AG04450 (cell line): ENCODE measurements at regions of chr9 and their contacts with region 1.

Region 1: DNA sequence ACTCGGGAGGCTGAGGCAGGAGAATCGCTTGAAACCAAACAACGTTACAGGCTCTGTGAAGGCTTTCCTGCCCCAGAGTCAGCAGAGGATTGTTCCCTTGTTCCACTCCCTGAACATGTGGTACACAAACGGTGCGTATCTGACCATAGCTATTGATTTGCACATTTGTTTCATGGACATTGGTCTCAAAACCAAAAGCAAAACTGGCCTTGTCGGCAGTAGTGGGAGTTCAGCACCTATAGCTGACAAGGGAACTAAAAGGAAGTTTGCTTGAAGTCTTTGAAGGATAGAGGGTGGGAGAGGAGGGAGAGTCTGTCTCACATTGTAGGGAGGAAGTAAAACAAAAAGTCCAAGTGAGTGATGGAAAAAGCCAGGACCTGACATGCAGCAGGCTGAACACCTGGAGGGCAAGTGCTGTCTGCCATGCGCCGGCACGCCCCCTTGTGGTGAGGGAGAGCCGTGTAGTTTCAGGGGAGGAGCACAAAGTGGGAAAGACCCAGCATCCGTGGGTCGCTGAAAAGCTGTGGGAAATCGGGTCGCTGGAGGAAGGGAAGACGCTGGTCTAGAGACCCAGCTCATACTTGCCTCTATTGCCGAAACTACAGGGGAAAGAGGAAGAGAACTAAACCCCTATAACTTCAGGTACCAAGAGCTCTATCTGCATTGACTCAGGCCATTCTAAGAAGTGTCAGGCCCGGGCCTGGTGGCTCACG is 58.0 kb downstream of the RAD23B start:
- DNase-seq: peak; percentile 27
- H3K4me3 ChIP-seq: no peak overlapping the region
- H3K27ac ChIP-seq: no peak overlapping the region
- H3K27me3 ChIP-seq: no peaks in the 10 kb centered on the region
- CTCF ChIP-seq: peak; percentile 93

Region 2: GRCh38 chr9:107172160-107172978 is 168.7 kb before region 1 on chr9:
- CTCF ChIA-PET with region 1: interaction called, 17 read pairs
- POLR2A ChIA-PET with region 1: no interaction called
- DNase-seq: peak; percentile 65
- H3K4me3 ChIP-seq: no peak overlapping the region
- H3K27ac ChIP-seq: no peak overlapping the region
- H3K27me3 ChIP-seq: no peaks in the 10 kb centered on the region
- CTCF ChIP-seq: peak; percentile 96

Region 3: DNA sequence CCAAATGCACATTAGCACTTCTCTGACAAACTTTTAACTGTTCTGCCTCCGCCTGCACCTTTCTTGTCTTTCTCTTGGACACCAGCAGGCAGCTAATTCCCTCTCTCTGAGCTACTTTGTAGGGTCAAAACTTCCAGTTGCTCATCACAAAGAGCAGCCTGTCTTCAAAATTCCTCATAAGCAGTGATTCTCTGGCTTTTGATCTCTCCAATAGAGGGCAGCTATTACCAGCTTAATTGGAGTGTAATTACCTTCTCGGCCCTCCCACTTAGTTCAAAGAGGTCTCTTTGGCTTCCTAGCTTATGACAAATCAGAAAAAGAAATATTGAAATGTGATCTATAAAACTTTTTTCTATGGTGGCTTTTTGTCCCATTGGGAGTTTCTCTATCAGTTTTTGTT is 101.6 kb before region 1 on chr9:
- CTCF ChIA-PET with region 1: interaction called, 29 read pairs
- POLR2A ChIA-PET with region 1: no interaction called
- DNase-seq: no peak
- H3K4me3 ChIP-seq: no peak overlapping the region
- H3K27ac ChIP-seq: no peak overlapping the region
- H3K27me3 ChIP-seq: no peaks in the 10 kb centered on the region
- CTCF ChIP-seq: peak; percentile 35; the same call in 1 of the 2 replicates

Region 4: DNA sequence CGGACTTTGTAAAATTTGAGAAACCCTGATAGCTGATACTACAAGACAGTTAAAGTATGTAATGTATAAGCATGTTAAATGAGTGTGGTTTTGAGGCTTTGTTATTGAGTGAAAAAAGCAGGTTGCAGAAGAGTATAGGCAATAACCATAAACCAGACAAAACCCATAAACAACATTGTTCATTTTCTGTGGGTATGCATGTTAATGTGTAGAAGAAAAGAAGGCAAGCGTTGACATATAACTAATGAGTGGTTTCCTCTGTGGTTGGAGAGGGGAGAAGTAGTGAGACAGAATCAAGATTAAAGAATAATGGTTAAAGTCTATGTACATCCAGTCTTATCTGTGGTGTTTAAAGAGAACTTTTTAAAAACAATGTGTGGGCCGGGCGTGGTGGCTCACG is 31.8 kb before region 1 on chr9:
- CTCF ChIA-PET with region 1: interaction called, 11 read pairs
- POLR2A ChIA-PET with region 1: no interaction called
- DNase-seq: no peak
- H3K4me3 ChIP-seq: no peak overlapping the region
- H3K27ac ChIP-seq: no peak overlapping the region
- H3K27me3 ChIP-seq: no peaks in the 10 kb centered on the region
- CTCF ChIP-seq: no peak